ENCODE measurements at regions of chr2 and their contacts with region 1.

Region 1: GRCh38 chr2:162073888-162074645 is at the start of gene DPP4:
- DNase-seq: peak; percentile 66
- H3K4me3 Mint-ChIP-seq: peak within 1 kb of the TSS; percentile 96
- H3K27ac Mint-ChIP-seq: peak within 1 kb of the TSS; percentile 89
- H3K4me1 Mint-ChIP-seq: peaks cover 43% of the 10 kb centered on the region
- H3K27me3 Mint-ChIP-seq: no peaks in the 10 kb centered on the region
- total RNA-seq, gene DPP4: 122 to 126 TPM

Region 2: DNA sequence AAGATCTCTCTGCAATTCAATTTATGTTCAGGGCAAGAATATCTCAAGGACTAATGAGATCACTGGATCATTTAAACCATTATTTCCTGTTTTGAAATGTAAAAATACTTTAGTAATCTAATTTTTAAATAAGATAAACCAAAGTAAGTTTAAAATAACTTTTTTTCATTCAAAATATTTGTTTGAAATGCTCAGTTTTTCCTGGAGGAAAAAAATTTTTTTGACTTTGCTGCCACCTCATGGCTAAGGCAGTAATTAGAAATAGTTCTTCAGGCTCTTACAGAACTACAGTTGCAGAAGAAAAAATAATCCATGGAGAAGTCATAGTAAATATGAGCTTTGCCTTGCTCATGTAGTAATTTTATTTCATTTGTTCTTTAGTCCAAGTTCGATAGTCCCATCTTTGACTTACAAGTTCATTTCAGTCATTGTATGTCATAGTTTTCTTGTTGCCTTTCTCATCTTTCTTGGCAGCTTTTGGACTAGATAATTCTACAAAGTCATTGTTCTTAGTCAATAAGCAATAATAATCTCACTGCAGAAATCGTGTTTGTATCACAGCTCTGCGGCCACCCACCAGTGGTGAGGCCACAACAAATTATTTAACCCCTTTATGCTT is 127.5 kb before region 1 on chr2:
- CTCF ChIA-PET with region 1: interaction called, 10 read pairs
- POLR2A ChIA-PET with region 1: interaction called, 68 read pairs
- DNase-seq: no peak
- H3K4me3 Mint-ChIP-seq: no peak overlapping the region
- H3K27ac Mint-ChIP-seq: no peak overlapping the region
- H3K4me1 Mint-ChIP-seq: peaks cover 34% of the 10 kb centered on the region
- H3K27me3 Mint-ChIP-seq: peaks cover 2% of the 10 kb centered on the region

Region 3: GRCh38 chr2:161954103-161954502 is 120.0 kb before region 1 on chr2:
- CTCF ChIA-PET with region 1: no interaction called
- POLR2A ChIA-PET with region 1: interaction called, 68 read pairs
- DNase-seq: peak; percentile 27
- H3K4me3 Mint-ChIP-seq: no peak overlapping the region
- H3K27ac Mint-ChIP-seq: peak overlapping the region; percentile 89
- H3K4me1 Mint-ChIP-seq: peaks cover 70% of the 10 kb centered on the region
- H3K27me3 Mint-ChIP-seq: no peaks in the 10 kb centered on the region

Region 4: DNA sequence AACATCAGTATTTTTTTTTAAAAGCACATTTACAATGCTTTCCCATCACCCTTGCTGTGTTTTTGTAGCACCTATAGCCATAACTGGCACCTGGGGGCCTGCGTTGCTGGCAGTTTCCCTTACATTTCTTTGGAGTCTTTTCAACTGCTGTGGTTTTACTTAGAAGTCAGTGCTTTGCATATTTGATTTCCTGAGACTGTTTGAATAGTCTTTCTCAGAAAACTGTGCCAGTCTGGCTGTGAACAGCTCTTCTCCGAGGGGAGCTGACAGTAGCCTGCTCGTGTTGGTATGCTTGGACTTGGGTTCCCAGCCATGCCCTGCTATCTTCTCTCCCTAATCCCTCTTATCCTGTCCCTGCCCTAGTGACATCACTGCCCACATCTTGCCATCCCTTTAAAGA is 81.5 kb before region 1 on chr2:
- CTCF ChIA-PET with region 1: interaction called, 9 read pairs
- POLR2A ChIA-PET with region 1: interaction called, 62 read pairs
- DNase-seq: peak; percentile 77
- H3K4me3 Mint-ChIP-seq: peak overlapping the region; percentile 86
- H3K27ac Mint-ChIP-seq: peak overlapping the region; percentile 100
- H3K4me1 Mint-ChIP-seq: peaks cover 69% of the 10 kb centered on the region
- H3K27me3 Mint-ChIP-seq: no peaks in the 10 kb centered on the region

Region 5: DNA sequence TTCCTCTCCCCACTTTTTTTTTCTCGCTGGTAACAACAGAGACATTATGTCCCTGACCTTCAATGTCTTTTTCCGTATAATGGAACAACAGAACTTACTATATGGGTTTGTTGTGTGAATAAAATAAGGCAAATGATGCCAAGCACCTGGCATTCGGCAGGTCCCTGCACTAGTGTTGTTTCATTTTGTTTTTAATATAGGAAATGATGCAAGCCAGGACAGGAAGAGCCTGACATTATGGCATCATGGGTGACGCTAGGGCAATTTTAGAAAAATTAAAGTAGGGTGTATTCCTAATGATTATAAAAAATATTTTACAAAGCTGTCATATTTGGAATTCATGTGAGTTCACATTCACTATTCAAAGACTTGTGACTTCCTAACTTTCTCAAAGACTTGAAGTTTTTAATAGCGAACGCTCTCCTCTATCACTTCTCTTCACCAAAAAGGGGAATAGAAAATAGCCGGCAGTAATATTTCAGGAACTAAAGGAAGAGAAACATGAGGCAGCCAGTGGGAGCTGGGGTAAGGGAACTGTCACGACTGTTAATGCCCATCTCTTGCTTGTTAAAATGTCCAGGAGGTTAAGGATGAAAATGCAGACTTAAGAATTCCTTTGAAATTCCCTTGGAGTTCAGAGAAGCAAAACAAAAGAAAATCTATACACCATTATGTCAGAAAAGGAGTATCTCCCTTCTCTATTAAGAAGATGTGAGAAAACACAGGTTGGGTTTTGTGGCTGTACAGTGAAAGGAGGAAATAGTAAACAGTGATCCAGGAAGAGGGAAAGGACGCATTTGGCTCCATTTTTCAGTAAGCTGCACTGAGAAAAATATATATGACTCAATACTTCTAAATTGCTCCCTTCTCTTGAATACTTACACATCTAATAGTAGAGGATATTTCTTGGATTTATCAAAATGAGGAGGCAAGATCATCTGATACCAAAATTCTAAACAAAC is 60.3 kb before region 1 on chr2:
- CTCF ChIA-PET with region 1: interaction called, 19 read pairs
- POLR2A ChIA-PET with region 1: interaction called, 26 read pairs
- DNase-seq: no peak
- H3K4me3 Mint-ChIP-seq: peak overlapping the region; percentile 50
- H3K27ac Mint-ChIP-seq: peak overlapping the region; percentile 91
- H3K4me1 Mint-ChIP-seq: peaks cover 74% of the 10 kb centered on the region
- H3K27me3 Mint-ChIP-seq: no peaks in the 10 kb centered on the region

Region 6: GRCh38 chr2:162058973-162059668 is 14.9 kb before region 1 on chr2:
- CTCF ChIA-PET with region 1: interaction called, 22 read pairs
- POLR2A ChIA-PET with region 1: interaction called, 142 read pairs
- DNase-seq: peak; percentile 29
- H3K4me3 Mint-ChIP-seq: peak overlapping the region; percentile 72
- H3K27ac Mint-ChIP-seq: peak overlapping the region; percentile 94
- H3K4me1 Mint-ChIP-seq: peaks cover 89% of the 10 kb centered on the region
- H3K27me3 Mint-ChIP-seq: no peaks in the 10 kb centered on the region

Region 7: DNA sequence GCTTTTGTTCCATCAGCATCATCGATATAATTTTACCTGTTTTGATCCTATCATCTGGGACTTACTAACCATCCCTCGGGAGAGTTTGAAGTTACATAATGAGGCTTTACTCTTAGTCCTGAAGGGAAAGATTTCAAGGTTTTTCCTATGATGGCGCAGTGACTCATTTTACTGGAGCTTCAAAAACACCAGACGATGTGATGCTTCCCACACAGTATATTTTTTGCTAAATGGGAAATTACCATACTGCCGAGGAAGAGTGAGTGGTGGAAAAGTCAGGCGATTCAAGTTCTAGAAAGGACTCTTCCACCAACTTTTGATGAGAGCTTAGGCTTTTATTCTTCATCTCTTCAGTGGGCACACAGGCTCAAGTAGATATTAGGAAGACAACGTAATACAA is 122.6 kb after region 1 on chr2:
- CTCF ChIA-PET with region 1: no interaction called
- POLR2A ChIA-PET with region 1: no interaction called
- DNase-seq: no peak
- H3K4me3 Mint-ChIP-seq: no peak overlapping the region
- H3K27ac Mint-ChIP-seq: no peak overlapping the region
- H3K4me1 Mint-ChIP-seq: no peaks in the 10 kb centered on the region
- H3K27me3 Mint-ChIP-seq: peaks cover 31% of the 10 kb centered on the region

Region 8: DNA sequence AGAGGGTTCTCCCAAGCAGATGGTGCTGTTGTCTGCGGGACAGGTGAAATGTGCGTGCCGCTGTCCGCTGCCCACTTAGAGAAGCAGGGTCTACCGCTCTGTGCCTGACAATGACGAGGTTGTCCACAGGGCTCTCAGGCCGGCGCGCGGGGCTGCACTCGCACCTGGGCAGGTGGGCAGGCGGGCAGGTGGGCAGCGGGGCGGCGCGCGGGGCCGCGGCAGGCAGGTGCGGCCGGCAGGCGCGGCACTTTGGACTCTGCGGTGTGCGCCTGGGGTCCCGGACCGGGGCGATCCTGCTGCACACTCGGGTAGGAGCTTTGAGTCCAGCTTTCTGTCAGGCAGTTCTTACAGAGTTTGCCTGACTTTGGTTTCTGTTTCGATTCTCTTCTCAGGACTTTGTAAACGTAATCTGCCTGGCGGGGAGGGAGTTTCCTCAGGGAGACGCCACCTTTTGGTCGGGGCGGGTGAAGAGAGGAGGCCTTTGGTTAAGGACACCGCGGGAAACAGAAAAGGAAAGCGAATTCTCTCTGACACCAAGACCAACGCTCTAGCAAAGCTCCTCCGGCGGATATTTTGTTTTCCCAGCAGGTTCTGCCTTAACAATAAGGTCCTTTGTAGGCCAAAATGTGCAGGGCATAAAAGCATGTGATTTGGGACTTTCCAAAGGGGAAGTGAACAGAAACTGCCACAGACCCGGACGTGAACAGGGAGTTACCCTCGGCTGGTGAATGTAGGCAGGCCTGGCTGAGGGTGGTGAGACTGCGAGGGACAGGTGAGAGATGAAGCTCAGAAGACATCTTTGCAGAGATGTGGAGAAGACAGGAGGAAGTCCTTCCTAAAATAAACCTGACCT is 244.5 kb after region 1 on chr2 and contains the start of gene IFIH1:
- CTCF ChIA-PET with region 1: no interaction called
- POLR2A ChIA-PET with region 1: interaction called, 11 read pairs
- DNase-seq: peak; percentile 82
- H3K4me3 Mint-ChIP-seq: peak within 1 kb of the TSS; percentile 89
- H3K27ac Mint-ChIP-seq: peak within 1 kb of the TSS; percentile 94
- H3K4me1 Mint-ChIP-seq: peaks cover 57% of the 10 kb centered on the region
- H3K27me3 Mint-ChIP-seq: no peaks in the 10 kb centered on the region
- total RNA-seq, gene IFIH1: 63.9 to 66.9 TPM